ENCODE measurements at regions of chr12 and their contacts with region 1.

Region 1: GRCh38 chr12:51419425-51420208 is 5.0 kb upstream of the SLC4A8 start:
- DNase-seq: peak; percentile 52 to 70 (median 66)
- H3K4me3 ChIP-seq: no peak overlapping the region
- H3K27ac ChIP-seq: no peak overlapping the region
- H3K4me1 ChIP-seq: peaks cover 3 to 8% (median 5%) of the 10 kb centered on the region in 4 experiments
- H3K27me3 ChIP-seq: no peaks in the 10 kb centered on the region

Region 2: GRCh38 chr12:51391283-51392162 is 28.1 kb before region 1 on chr12 and contains the start of gene GALNT6:
- CTCF ChIA-PET with region 1: interaction called, 41 read pairs
- POLR2A ChIA-PET with region 1: interaction called, 3 read pairs
- DNase-seq: peak; percentile 46 to 70 (median 56)
- H3K4me3 ChIP-seq: peak within 1 kb of the TSS; percentile 48 to 89 (median 77)
- H3K27ac ChIP-seq: peak within 1 kb of the TSS; percentile 54 to 73
- H3K4me1 ChIP-seq: peaks cover 21 to 85% (median 76%) of the 10 kb centered on the region in 4 experiments
- H3K27me3 ChIP-seq: no peaks in the 10 kb centered on the region

Region 3: DNA sequence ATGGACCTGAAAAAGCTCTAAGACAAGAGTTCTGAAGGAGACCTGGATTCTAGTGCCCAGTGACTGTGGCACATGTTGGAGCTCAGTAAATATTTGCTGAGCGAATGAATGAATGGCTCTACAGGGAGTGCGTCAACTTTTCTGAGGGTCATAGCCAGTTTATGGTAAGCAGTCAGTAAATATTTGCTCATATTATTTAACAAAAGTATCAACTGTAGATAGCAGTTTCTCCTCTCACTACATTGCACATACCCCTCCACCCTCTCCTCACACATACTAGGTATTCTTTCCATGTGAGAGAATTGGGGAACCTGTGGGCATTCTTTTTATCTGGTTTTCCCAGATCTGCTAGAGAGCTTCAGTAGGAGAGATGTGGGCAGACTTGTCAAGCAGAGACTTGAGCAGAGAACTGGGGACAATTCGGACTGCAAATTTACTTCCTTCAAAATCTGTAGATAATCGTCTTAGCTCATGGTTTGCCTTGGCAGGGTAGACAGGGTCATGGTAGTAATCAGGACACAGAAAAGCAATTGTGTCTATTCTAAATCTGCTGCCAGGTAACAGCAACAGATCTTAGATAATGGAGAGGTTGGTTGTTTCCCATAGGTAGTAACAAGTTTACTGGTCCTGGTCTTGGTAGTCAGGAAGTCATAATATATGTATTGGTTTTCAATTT is 10.8 kb after region 1 on chr12:
- CTCF ChIA-PET with region 1: interaction called, 10 read pairs
- POLR2A ChIA-PET with region 1: no interaction called
- DNase-seq: no peak
- H3K4me3 ChIP-seq: no peak overlapping the region
- H3K27ac ChIP-seq: no peak overlapping the region
- H3K4me1 ChIP-seq: peaks cover 0 to 14% (median 3%) of the 10 kb centered on the region in 4 experiments
- H3K27me3 ChIP-seq: no peaks in the 10 kb centered on the region

Region 4: DNA sequence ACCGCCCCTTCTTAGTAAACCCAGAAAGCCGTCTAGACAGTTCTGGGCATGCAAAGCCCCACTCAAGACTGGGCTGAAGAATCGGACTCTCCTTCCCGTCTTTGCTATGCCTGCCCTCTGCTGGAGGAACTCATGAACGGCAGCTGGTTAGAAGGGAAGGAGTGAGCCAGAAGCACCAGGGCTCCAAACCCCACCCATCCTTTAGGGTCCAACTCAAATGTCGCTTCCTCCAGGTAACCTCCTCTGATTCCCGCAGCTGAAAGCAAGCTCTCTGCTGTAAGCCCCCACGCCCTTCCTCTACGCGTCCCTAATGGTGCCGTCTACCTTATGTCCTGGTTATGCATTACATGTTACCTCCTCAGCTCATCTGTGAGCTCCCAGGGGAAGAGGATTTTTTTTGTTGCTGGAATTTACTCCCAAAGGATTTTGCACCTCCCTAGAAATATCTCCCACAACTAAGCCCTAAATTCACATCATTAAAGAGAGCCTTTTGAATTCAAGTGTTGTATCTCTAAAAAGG is 112.4 kb after region 1 on chr12:
- CTCF ChIA-PET with region 1: interaction called, 118 read pairs
- POLR2A ChIA-PET with region 1: no interaction called
- DNase-seq: peak; percentile 77 to 89 (median 83)
- H3K4me3 ChIP-seq: peak overlapping the region in 1 of 7 experiments; percentile 23
- H3K27ac ChIP-seq: no peak overlapping the region
- H3K4me1 ChIP-seq: peaks cover 0 to 2% (median 0%) of the 10 kb centered on the region in 4 experiments
- H3K27me3 ChIP-seq: no peaks in the 10 kb centered on the region